GM10248 (cell line): ENCODE measurements at regions of chr2 and their contacts with region 1.

Region 1: DNA sequence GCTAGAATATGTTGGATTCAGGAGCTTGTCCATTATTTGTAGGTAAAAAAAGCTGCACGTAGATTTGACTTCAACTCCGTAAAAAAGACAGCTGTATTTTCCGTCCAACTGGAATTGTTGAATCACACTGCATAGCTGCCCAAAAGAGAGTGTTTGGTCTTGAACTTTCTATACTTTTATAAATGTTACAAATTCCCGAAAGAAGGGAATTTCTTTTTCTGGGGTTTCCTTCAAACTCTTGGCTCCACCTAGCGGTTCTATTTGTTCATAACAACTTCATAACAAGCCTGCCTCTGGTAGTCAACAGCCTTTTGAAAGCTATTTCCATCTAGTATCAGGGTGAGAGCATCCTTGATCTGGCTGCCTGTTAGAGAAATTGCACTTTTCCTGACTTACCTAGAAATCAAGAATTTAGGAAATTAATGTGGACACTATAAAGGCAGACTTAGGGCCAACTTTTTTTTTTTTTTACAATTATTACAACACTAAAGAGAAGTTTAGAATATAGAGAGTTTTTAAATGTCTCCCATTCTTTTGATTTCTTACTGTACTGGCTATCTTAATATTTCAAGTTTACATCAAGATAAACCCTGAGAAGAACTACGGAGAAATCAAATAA is 48.1 kb downstream of the TMEM185B start:
- DNase-seq: peak; percentile 53
- CTCF ChIP-seq: peak; percentile 59

Region 2: DNA sequence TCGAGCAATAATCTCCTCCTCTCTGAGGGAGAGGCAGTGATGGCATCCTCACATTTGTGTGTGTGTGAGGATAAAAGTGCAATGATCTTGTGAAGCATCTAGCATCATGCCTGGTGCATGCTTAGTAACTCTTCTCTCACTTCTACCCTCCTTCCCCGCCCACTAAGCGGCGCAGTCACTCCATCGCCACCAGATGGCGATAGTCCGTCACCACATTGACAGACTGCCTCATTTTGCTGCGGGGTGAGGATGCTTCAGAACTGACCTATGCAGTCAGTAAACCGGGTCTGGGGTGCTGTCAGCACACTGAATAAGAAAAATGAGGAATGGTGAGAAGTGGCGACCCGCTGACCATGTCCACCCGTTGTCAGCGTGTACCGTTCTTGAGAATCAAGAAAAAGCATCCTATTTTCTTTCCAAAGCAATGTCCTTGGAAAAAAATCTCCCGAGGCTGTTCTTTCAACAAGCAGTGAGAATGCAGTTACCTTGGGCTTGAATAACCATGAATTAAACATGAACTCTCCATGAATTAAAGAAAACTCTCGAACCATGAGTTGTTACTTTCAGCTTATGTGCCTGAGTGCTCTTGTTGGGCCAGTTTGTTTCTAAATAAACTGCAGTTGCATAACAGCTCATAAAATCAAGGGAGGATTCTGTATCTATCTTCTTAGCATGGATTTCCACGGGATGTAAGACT is 533.4 kb before region 1 on chr2:
- CTCF ChIA-PET with region 1: interaction called, 42 read pairs
- POLR2A ChIA-PET with region 1: interaction called, 3 read pairs
- DNase-seq: peak; percentile 83
- CTCF ChIP-seq: peak; percentile 99

Region 3: GRCh38 chr2:119702918-119703401 is 472.1 kb before region 1 on chr2:
- CTCF ChIA-PET with region 1: interaction called, 82 read pairs
- POLR2A ChIA-PET with region 1: no interaction called
- DNase-seq: peak; percentile 85
- CTCF ChIP-seq: peak; percentile 95

Region 4: GRCh38 chr2:119753041-119753929 is 421.8 kb before region 1 on chr2:
- CTCF ChIA-PET with region 1: interaction called, 100 read pairs
- POLR2A ChIA-PET with region 1: no interaction called
- DNase-seq: peak; percentile 53
- CTCF ChIP-seq: peak; percentile 70

Region 5: DNA sequence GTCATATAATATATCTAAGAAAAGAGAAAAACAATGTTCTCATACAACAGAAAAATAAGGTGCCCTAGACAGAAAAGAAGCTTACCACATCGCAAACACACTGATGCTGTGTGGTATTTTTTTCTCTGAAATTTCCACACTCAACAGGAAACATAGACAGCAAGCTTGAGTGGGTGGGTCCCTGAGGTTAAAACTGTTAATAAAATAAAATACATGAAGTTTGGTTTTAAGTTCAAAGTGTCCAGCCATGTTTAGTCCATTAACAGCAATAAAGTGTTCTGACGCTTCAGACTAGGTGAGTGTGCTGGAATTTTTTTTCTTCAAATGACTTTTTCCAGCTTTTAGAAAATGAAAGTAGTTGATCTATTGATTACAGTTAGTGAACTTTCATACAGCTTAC is 245.5 kb before region 1 on chr2:
- CTCF ChIA-PET with region 1: no interaction called
- POLR2A ChIA-PET with region 1: no interaction called
- DNase-seq: no peak
- CTCF ChIP-seq: no peak

Region 6: GRCh38 chr2:120109186-120110061 is 65.6 kb before region 1 on chr2:
- CTCF ChIA-PET with region 1: interaction called, 56 read pairs
- POLR2A ChIA-PET with region 1: no interaction called
- DNase-seq: peak; percentile 28
- CTCF ChIP-seq: peak; percentile 59

Region 7: GRCh38 chr2:120161190-120161589 is 13.9 kb before region 1 on chr2:
- CTCF ChIA-PET with region 1: interaction called, 47 read pairs
- POLR2A ChIA-PET with region 1: no interaction called
- DNase-seq: no peak
- CTCF ChIP-seq: no peak

Region 8: DNA sequence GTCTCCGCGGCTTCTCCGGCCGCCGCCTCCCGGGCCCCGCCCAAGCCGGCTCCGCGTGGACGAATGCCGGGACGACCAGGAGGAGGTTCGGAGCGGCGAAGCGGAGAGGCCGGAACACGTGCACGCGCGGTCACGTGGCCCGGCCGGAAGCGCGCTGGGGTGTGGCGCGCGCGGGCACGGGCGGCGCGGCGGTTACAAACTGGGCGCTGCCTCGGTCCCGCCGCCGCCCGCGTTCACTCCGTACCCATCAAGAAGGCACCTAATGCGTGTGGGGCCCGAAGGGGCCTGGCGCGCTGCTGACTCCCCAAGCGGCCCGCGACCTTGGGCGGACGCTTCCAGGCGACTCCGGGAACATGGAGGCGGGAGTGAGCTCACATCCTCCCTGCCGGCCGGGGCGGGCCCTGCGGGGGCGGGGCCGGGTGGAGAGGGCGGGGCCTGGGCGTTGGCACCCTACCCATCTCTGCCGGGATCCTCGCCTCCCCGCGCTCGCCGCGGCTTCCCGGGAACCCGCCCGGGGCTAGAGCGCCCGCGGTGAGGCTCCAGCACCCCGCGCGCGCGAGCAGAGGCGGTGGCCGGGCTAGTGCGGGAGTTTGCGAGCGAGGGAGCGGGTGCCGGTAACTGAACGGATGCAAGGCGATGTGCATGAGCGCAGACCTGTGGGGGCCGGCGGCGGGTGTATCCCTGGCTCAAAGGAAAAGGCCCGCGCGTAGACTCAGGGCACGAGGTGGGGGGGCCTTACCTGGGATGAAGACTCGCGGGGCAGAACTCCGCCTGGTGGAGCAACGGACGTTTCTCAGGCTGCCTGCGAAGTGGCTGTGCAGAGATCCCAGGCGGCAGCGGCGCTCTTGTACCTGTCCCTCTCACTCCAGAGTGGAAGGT is 48.2 kb after region 1 on chr2 and contains the start of gene TMEM185B:
- CTCF ChIA-PET with region 1: interaction called, 19 read pairs
- POLR2A ChIA-PET with region 1: no interaction called
- DNase-seq: peak; percentile 95
- CTCF ChIP-seq: no peak